Activated T-helper 2 cell treated with anti-CD3 and anti-CD28 coated beads, Interferon-gamma antibody, Interleukin-2, Interleukin-4, amounts not matched to agents 10 μg/mL and 5 μg/mL and 100 μg/mL, durations not matched to agents 14 hours and 24 hours and 36 hours (primary cell): ENCODE measurements at regions of chr13 and their contacts with region 1.

Region 1: GRCh38 chr13:48094781-48095502 is at the start of gene MED4:
- DNase-seq: peak; percentile 96
- H3K4me3 Mint-ChIP-seq: peak within 1 kb of the TSS; percentile 99
- H3K27ac Mint-ChIP-seq: peak within 1 kb of the TSS; percentile 95
- H3K4me1 Mint-ChIP-seq: peaks cover 26% of the 10 kb centered on the region
- H3K27me3 Mint-ChIP-seq: peaks cover 8% of the 10 kb centered on the region
- total RNA-seq, gene MED4: 56.1 and 56.3 TPM in 2 replicates

Region 2: DNA sequence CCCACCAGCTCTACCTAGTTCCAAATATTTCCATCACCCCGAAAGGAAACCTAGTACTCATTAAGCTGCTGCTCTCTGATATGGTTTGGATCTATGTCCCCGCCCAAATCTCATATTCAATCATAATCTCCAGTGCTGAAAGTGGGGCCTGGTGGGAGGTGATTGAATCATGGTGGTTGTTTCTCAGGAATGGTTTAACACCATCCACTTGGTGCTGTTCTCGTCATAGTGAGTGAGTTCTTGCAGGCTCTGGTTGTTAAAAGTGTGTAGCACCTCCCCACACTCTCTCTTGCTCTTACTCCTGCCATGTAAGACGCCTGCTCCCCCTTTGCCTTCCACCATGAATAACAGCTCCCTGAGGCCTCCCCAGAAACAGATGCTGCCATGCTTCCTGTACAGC is 43.3 kb after region 1 on chr13:
- intact Hi-C with region 1: loop called (anchors 1 kb)
- DNase-seq: no peak
- H3K4me3 Mint-ChIP-seq: no peak overlapping the region
- H3K27ac Mint-ChIP-seq: no peak overlapping the region
- H3K4me1 Mint-ChIP-seq: peaks cover 5% of the 10 kb centered on the region
- H3K27me3 Mint-ChIP-seq: peaks cover 5% of the 10 kb centered on the region